IMR-90 (cell line): ENCODE measurements at regions of chr6 and their contacts with region 1.

Region 1: GRCh38 chr6:113732384-113732966 is 124.7 kb upstream of the MARCKS start:
- DNase-seq: peak; percentile 14
- ATAC-seq: peak; percentile 46
- H3K4me3 ChIP-seq: no peak overlapping the region
- H3K27ac ChIP-seq: no peak overlapping the region
- H3K4me1 ChIP-seq: 0 out of 2 replicates have a peak, but pooled peaks cover 2% of the 10 kb centered on the region
- H3K27me3 ChIP-seq: no peaks in the 10 kb centered on the region
- CTCF ChIP-seq: no peak
- POLR2A ChIP-seq: no peak
- RAD21 ChIP-seq: no peak

Region 2: GRCh38 chr6:113642714-113643406 is 89.6 kb before region 1 on chr6:
- CTCF ChIA-PET with region 1: no interaction called
- POLR2A ChIA-PET with region 1: interaction called, 11 read pairs
- dilution Hi-C with region 1: no loop called
- in situ Hi-C with region 1: no loop called
- intact Hi-C with region 1: no loop called
- DNase-seq: peak; percentile 28
- ATAC-seq: no peak
- H3K4me3 ChIP-seq: no peak overlapping the region
- H3K27ac ChIP-seq: no peak overlapping the region
- H3K4me1 ChIP-seq: peaks cover 6% of the 10 kb centered on the region
- H3K27me3 ChIP-seq: no peaks in the 10 kb centered on the region
- CTCF ChIP-seq: no peak
- POLR2A ChIP-seq: no peak
- RAD21 ChIP-seq: no peak